Psoas muscle (tissue), 8 donors: ENCODE measurements at regions of chr4 and their contacts with region 1.

Region 1: GRCh38 chr4:158444621-158445020 is 77.1 kb upstream of the RXFP1 start:
- DNase-seq: no peak
- ATAC-seq: no peak
- H3K4me3 ChIP-seq: no peak overlapping the region
- H3K27ac ChIP-seq: no peak overlapping the region
- H3K4me1 ChIP-seq: no peaks in the 10 kb centered on the region
- H3K27me3 ChIP-seq: no peaks in the 10 kb centered on the region
- CTCF ChIP-seq: no peak

Region 2: GRCh38 chr4:158302076-158302866 is 142.3 kb before region 1 on chr4:
- intact Hi-C with region 1: no loop called
- DNase-seq: no peak
- ATAC-seq: no peak
- H3K4me3 ChIP-seq: no peak overlapping the region
- H3K27ac ChIP-seq: no peak overlapping the region
- H3K4me1 ChIP-seq: no peaks in the 10 kb centered on the region
- H3K27me3 ChIP-seq: no peaks in the 10 kb centered on the region
- CTCF ChIP-seq: no peak

Region 3: GRCh38 chr4:160117686-160118085 is 1673.1 kb after region 1 on chr4:
- intact Hi-C with region 1: loop called in 1 of 2 experiments (anchors 5 kb)
- DNase-seq: no peak
- ATAC-seq: no peak
- H3K4me3 ChIP-seq: no peak overlapping the region
- H3K27ac ChIP-seq: no peak overlapping the region
- H3K4me1 ChIP-seq: no peaks in the 10 kb centered on the region
- H3K27me3 ChIP-seq: no peaks in the 10 kb centered on the region
- CTCF ChIP-seq: no peak